ENCODE measurements at regions of chr22 and their contacts with region 1.

Region 1: DNA sequence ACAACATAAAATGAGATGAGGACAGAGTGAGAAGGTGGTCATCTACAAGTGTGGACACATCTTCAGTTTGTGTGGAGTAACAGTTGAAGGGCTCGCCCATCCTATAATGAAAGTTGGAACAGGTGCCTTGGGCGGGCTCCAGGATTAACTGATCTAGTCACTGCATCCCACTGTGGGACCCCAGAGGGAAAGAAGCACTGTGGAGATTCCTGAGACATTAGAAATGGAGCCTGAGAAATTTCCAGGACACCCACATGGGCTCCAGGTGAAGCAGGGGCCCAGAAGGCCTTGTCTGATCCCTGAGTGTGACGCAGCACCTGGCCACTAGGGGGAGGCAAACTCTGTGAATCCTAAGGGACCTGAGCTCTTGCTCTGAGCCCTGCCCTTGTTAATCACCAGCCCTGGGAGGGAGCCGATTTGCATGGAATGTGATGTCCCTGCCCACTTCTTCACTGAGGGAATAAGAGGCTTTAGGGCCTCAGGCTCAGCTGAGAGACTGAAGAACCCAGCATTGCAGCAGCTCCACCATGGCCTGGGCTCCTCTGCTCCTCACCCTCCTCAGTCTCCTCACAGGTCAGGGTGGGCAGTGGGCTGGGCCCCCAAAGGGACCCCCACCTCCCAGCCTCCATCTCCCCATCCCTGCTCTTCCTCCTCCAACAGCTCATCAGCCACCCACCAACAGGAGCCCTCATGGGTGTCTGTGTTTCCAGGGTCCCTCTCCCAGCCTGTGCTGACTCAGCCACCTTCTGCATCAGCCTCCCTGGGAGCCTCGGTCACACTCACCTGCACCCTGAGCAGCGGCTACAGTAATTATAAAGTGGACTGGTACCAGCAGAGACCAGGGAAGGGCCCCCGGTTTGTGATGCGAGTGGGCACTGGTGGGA is 98.4 kb downstream of the VPREB1 start:
- DNase-seq: peak; percentile 18
- H3K4me3 ChIP-seq: no peak overlapping the region
- H3K27ac ChIP-seq: no peak overlapping the region
- H3K4me1 ChIP-seq: no peaks in the 10 kb centered on the region
- H3K27me3 ChIP-seq: peaks cover 6 to 17% of the 10 kb centered on the region in 2 experiments
- CTCF ChIP-seq: peak; percentile 70 to 88
- POLR2A ChIP-seq: no peak

Region 2: DNA sequence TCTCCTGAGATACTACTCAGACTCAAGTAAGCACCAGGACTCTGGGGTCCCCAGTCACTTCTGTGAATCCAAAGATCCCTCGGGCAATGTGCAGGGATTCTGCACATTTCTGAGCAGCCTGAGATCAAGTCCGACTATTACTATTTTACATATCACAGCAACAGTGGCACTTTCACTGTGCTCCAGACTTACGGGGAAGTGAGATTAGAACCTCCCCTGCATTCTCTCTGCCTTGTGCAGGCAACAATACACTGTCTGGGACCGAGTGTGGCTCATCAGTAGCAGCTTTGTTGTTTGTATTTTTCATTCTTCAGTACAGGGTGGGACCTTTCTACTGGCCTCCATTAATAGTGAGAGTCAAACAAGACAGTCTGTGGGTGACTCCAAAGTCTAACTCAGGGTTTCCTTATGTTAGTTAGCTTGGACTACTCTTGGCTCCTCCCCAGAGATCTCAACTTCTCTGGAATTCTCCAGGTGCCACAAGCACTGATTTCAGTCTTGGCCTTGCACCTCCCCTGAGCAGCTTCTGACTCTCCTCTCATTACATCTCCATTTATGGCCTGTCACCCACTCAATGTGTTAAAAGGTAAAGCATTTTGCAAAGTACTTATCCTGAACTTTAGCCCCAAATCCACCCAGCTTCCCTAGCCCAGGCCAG is 284.2 kb before region 1 on chr22:
- CTCF ChIA-PET with region 1: no interaction called
- POLR2A ChIA-PET with region 1: no interaction called
- dilution Hi-C with region 1: no loop called
- intact Hi-C with region 1: no loop called
- DNase-seq: no peak
- H3K4me3 ChIP-seq: no peak overlapping the region
- H3K27ac ChIP-seq: no peak overlapping the region
- H3K4me1 ChIP-seq: no peaks in the 10 kb centered on the region
- H3K27me3 ChIP-seq: peaks cover 17% of the 10 kb centered on the region in 2 experiments
- CTCF ChIP-seq: no peak
- POLR2A ChIP-seq: no peak

Region 3: GRCh38 chr22:22329792-22330191 is 13.1 kb before region 1 on chr22:
- CTCF ChIA-PET with region 1: interaction called, 47 read pairs
- POLR2A ChIA-PET with region 1: no interaction called
- dilution Hi-C with region 1: no loop called
- intact Hi-C with region 1: no loop called
- DNase-seq: no peak
- H3K4me3 ChIP-seq: no peak overlapping the region
- H3K27ac ChIP-seq: no peak overlapping the region
- H3K4me1 ChIP-seq: no peaks in the 10 kb centered on the region
- H3K27me3 ChIP-seq: peaks cover 3 to 8% of the 10 kb centered on the region in 2 experiments
- CTCF ChIP-seq: no peak
- POLR2A ChIP-seq: no peak